Ascending aorta (tissue), 2 donors: ENCODE measurements at regions of chr2 and their contacts with region 1.

Region 1: DNA sequence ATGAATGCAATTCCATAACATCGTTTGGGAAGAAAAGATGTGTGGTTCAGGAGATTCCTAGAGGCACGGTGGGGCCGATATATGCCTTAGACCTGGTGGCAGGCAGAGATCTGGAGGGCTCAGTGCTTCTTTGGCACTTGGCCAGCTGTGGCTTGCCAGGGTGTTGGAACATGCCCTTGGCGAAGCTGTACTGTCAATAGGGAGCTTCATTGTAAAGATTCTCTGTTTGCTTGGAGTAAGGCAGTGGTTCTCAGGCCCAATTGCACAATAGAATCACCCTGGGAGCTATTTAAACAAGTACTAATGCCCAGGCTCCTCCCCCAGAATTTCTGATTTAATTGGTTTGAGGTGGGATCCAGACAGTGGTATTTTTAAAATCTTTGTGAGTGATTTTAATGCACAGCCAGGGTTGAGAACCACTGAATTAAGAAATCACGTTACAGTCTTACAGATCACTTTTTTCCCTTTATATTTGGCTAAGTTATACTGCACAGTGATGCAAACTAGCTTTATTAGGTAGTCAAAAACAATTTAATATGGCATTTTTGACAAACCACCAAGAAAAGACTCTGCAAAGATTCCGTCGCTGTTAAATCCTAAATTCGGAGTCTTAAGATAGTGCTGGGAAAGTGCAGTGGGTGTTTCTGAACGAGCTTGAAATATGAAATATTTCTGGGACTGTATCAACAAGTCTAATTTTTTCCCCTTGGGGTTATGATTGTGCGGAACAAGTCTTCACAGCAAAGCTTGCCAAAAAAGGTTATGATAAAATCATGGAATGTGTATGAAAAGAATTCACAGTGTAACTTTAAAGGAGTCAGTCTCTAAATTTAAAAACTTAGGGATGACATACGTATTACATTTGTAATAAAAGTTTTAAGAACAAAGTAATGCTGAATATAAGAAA is 78.0 kb downstream of the CRIM1 start:
- DNase-seq: peak in 1 of 2 donors; percentile 83
- H3K4me3 ChIP-seq: peak overlapping the region in 1 of 2 donors; percentile 37
- H3K27ac ChIP-seq: peak overlapping the region; percentile 85 to 86
- H3K4me1 ChIP-seq: peaks cover 15 to 75% of the 10 kb centered on the region in 2 donors
- H3K27me3 ChIP-seq: no peaks in the 10 kb centered on the region
- CTCF ChIP-seq: no peak

Region 2: GRCh38 chr2:36413218-36413617 is 20.3 kb before region 1 on chr2:
- intact Hi-C with region 1: loop called (anchors 2 kb)
- DNase-seq: no peak
- H3K4me3 ChIP-seq: peak overlapping the region in 1 of 2 donors; percentile 29
- H3K27ac ChIP-seq: peak overlapping the region; percentile 43 to 67
- H3K4me1 ChIP-seq: peaks cover 3 to 85% of the 10 kb centered on the region in 2 donors
- H3K27me3 ChIP-seq: no peaks in the 10 kb centered on the region
- CTCF ChIP-seq: no peak

Region 3: DNA sequence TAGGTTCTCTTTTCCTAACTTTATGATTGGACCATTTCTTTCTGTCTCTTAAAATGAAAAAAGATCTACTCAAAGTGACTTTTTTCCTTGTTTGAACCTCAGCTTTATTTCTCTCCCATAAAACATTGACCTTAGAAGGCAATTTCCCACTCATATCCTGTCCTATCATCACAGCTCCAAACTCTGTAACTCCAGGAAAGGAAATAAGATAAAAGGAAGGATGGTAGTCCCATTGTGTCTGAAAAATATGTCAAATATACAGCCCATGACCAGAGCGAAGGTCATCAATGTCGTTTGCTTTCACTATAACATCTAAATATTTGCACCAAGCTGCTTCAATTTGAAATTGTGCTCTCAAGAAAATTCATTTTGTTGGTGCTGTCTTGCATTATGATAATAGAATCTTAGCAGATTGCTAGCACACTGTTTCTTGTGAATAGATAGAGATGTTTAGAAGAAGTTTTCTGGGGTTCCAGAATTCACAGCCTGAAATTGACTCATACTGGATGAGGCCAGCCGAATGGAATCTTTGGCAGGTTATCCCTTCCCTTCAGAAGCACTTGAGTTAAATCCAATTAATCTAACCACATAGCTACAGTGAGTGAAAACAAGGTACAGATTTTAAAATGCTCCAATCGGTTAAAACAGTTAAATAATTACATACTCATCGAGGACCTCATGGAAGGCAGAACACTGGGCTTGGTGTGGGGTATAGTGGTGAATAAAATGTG is 17.1 kb after region 1 on chr2:
- intact Hi-C with region 1: loop called (anchors 2 kb)
- DNase-seq: no peak
- H3K4me3 ChIP-seq: peak overlapping the region in 1 of 2 donors; percentile 16
- H3K27ac ChIP-seq: peak overlapping the region; percentile 77 to 94
- H3K4me1 ChIP-seq: peaks cover 46 to 88% of the 10 kb centered on the region in 2 donors
- H3K27me3 ChIP-seq: no peaks in the 10 kb centered on the region
- CTCF ChIP-seq: no peak

Region 4: GRCh38 chr2:36486546-36487044 is 53.0 kb after region 1 on chr2:
- intact Hi-C with region 1: loop called (anchors 5 kb)
- DNase-seq: no peak
- H3K4me3 ChIP-seq: no peak overlapping the region
- H3K27ac ChIP-seq: peak overlapping the region; percentile 81 to 88
- H3K4me1 ChIP-seq: peaks cover 15 to 66% of the 10 kb centered on the region in 2 donors
- H3K27me3 ChIP-seq: no peaks in the 10 kb centered on the region
- CTCF ChIP-seq: no peak